ENCODE measurements at regions of chr1 and their contacts with region 1.

Region 1: GRCh38 chr1:228212966-228213844 is 5.4 kb downstream of the OBSCN start:
- DNase-seq: peak; percentile 13
- H3K4me3 ChIP-seq: peak overlapping the region; percentile 37
- CTCF ChIP-seq: peak; percentile 55

Region 2: DNA sequence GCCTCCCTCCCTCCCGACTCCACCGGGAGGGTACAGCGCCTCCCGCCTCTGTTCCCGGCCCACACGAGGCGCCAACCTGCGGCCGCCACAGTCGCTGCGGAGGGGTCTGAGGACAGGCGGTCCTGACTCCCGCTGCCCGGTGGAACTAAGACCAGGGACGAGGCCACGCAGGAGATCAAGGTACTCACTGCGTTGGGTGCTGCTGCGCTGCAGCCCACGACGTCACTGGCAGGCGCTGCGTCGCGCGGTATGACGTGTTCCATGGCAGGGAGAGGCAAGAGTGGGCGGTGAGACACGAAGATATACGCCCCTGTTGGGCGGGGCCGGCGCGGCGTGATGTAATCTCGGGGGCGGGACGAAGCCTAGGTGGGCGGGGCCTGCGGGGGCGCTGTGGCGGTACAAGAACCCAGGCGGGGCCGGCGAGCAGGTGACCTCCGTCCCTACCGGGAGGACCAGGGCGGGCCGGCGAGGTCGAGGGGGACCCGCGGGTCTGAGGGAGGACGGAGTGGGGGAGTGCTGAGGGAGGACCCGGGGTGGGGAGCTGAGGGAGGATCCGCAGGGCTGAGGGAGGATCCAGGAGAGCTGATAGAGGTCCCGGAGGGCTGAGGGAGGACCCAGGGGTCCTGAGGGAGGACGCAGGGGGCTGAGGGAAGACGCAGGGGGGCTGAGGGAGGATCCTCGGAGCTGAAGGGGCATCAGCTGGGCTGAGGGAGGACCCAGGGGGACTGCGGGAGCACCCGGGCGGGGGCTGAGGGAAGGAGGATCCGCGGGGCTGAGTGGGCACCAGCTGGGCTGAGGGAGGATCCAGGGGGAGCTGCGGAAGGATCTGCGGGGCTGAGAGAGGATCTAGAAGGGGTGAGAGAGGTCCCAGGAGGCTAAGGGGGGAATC is 103.9 kb before region 1 on chr1 and contains the start of gene MRPL55:
- in situ Hi-C with region 1: loop called (anchors 5 kb)
- DNase-seq: peak; percentile 87
- H3K4me3 ChIP-seq: peak within 1 kb of the TSS; percentile 84
- CTCF ChIP-seq: no peak

Region 3: DNA sequence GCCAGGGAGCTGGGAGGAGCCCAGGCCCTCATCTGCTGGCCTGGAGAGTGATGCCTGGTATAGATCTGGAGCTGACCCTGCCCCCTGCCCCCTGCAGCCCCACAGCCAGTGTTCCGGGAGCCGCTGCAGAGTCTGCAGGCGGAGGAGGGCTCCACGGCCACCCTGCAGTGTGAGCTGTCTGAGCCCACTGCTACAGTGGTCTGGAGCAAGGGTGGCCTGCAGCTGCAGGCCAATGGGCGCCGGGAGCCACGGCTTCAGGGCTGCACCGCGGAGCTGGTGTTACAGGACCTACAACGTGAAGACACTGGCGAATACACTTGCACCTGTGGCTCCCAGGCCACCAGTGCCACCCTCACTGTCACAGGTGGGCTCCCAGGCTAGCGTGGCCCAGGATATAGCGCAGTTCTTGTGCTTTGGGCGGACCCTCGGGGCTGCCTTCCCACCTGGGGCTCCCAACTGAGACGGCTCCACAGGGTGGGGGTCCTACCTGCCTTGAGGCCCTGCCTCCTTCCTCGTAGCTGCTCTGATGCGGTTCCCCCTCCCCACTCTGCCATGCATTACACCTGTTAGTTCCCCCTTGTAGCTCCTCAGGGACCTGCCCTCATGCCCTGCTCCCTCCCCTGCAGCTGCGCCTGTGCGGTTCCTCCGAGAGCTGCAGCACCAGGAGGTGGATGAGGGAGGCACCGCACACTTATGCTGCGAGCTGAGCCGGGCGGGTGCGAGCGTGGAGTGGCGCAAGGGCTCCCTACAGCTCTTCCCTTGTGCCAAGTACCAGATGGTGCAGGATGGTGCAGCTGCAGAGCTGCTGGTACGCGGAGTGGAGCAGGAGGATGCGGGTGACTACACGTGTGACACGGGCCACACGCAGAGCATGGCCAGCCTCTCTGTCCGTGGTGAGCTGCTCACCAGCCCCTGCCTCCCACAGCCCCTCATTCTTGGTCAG is 93.3 kb after region 1 on chr1:
- in situ Hi-C with region 1: no loop called
- DNase-seq: no peak
- H3K4me3 ChIP-seq: no peak overlapping the region
- CTCF ChIP-seq: no peak

Region 4: DNA sequence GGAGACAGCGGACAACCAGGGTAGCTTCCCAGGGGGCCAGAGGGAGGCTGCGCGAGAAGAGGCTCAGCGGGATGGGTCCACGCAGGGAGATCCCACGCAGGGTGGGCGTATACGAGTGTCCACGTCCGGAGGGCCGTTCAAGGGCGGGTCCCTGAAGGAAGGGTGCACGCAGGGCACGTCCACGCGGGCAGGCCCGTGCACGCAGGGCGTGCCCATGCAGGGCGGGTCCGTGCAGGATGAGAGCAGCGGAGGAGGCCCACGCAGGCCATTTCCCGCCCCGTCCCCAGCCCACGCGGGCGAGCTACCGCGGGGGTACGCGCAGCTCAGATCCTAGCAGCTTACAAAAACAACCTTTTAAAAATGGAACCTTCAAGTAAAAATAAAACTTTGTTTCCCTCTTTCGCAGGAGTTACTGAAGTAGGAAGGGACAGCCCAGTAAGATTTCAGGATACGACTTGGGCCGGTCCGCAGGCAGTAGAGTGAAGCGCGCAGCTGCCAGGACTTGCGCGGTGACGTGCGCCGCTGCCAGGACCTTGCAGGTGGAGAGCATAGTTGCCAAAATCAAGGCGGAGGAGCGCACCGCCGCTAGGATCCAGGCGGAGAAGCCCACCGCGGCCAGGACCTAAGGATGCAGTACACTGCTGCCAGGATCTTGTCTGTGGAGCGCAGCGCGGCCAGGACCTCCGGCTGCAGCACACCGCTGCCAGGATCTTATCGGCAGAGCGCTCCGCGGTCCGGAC is 273.6 kb after region 1 on chr1:
- in situ Hi-C with region 1: no loop called
- DNase-seq: peak; percentile 57
- H3K4me3 ChIP-seq: peak overlapping the region; percentile 98
- CTCF ChIP-seq: no peak

Region 5: GRCh38 chr1:228794173-228794572 is 581.0 kb after region 1 on chr1:
- in situ Hi-C with region 1: no loop called
- DNase-seq: peak; percentile 5
- H3K4me3 ChIP-seq: no peak overlapping the region
- CTCF ChIP-seq: no peak